Posterior vena cava (tissue), 2 donors: ENCODE measurements at regions of chr19 and their contacts with region 1.

Region 1: GRCh38 chr19:12766051-12766521 is 9.3 kb downstream of the HOOK2 start:
- DNase-seq: peak; percentile 96

Region 2: DNA sequence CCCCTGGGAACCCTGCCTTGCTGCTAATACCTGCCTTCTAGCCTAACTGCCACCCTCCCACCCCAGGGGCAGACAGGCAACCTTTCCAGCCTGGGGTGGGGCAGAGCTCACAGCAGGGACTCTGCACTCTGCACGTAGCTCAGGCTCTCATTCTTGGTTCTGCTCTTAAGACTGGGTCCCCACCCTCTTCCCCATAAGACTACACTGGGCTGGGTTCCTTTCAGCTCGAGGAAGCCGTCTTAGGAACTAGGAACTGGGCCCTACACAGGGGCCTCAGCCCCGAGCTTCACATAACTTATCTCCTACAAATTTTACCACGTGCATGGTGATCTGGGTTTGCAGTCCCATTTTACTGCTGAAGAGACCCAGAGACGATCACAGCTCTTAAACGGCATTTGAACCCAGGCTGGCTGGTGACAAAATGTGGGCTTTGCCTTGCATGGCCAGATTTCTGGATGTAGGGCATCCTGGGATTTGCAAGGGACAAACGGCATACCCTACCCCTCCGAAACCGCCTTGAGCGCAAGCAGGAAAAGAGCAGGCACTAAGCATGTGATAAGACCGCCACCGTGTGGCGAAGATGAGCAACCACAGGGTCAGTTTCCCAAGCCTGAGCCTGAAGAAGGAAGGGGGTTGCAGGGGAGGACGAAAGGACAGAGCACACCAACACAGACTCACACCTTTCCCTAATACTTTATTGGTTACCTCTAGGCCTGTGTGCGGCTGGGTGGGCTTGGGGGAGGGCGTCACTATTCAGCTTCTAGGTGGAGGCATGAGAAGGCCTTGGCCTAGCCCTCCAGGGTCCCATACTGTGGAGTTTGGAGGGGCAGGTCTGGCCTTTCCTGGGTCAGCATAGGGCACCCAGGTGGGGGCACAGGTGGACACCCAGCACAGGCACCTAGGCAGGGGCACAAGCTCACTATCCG is 30.3 kb after region 1 on chr19:
- intact Hi-C with region 1: loop called (anchors 5 kb)
- DNase-seq: peak; percentile 93

Region 3: GRCh38 chr19:12801466-12802266 is 35.6 kb after region 1 on chr19 and contains the starts of genes PRDX2 and THSD8:
- intact Hi-C with region 1: loop called (anchors 5 kb)
- DNase-seq: peak; percentile 93
- total RNA-seq, gene PRDX2: 126 to 130 TPM
- total RNA-seq, gene THSD8: 1.00 to 1.6 TPM

Region 4: GRCh38 chr19:12847159-12848139 is 81.4 kb after region 1 on chr19:
- intact Hi-C with region 1: loop called (anchors 5 kb)
- DNase-seq: peak; percentile 94